Mammary epithelial cell (primary cell): ENCODE measurements at regions of chr5 and their contacts with region 1.

Region 1: DNA sequence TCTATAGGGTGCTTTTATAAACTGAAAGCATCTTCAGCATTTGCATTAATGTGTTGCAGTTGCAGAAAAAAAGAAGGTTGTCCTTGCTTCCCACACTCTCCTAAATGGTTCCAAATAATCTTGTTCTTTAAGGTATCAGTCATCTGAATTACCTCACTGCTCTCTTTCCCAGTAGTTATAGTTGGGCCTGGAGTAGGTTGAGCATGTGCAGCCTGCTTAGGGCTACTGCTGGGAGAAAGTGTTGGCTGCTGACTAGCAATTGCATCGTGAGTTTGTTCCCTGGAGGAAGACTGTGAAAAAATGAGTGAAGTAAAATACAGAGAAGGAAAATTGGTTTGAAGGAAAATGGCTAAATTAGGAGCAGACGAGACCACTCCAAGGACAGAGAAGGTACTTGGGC is 74.5 kb downstream of the PRR16 start:
- DNase-seq: peak; percentile 31
- H3K4me3 ChIP-seq: no peak overlapping the region
- H3K27ac ChIP-seq: peak overlapping the region; percentile 27
- H3K4me1 ChIP-seq: peaks cover 19% of the 10 kb centered on the region
- H3K27me3 ChIP-seq: no peaks in the 10 kb centered on the region
- CTCF ChIP-seq: no peak

Region 2: DNA sequence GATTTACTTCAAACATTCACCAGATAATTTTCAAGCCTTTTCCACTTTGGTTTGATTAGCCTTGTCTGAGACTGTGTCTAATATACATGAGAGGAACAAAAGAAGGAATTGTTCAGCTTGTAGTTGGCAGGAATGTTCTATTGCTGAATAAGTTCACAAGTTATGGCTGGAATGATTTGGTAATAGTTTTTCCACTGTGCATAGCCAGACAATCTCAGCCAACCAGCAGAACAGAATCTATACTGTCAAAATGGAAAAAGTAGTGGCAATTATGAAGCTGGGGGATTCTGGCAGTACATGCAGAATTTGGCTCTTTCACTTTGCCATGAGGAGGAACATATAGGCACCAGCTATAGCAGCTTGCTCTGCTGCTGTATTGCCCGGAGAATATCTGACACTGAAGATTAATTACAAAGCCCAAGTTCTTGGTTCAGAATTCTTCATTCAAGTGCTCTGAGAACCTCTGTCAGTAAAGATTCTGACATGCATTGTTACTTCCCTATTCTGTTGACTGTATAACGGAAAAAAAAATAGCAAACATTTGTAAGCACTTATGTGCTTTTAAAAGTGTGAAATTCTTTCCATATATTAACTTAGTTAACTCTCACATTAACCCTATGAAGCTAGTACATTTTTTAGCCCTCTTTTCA is 76.0 kb after region 1 on chr5:
- CTCF ChIA-PET with region 1: no interaction called
- dilution Hi-C with region 1: no loop called
- in situ Hi-C with region 1: no loop called
- intact Hi-C with region 1: loop called (anchors 5 kb)
- DNase-seq: peak; percentile 52
- H3K4me3 ChIP-seq: no peak overlapping the region
- H3K27ac ChIP-seq: peak overlapping the region; percentile 39
- H3K4me1 ChIP-seq: peaks cover 44% of the 10 kb centered on the region
- H3K27me3 ChIP-seq: no peaks in the 10 kb centered on the region
- CTCF ChIP-seq: no peak